Activated CD8-positive, alpha-beta T cell treated with anti-CD3 and anti-CD28 coated beads for 36 hours (primary cell): ENCODE measurements at regions of chr4 and their contacts with region 1.

Region 1: GRCh38 chr4:88523325-88524129 is at the start of gene PYURF:
- DNase-seq: peak; percentile 84
- ATAC-seq: peak; percentile 81
- H3K4me3 Mint-ChIP-seq: peak within 1 kb of the TSS; percentile 90
- H3K27ac Mint-ChIP-seq: peak within 1 kb of the TSS; percentile 89
- H3K4me1 Mint-ChIP-seq: peaks cover 35% of the 10 kb centered on the region
- H3K27me3 Mint-ChIP-seq: no peaks in the 10 kb centered on the region
- CTCF ChIP-seq: no peak
- total RNA-seq, gene PYURF: 47.4 to 50.7 TPM

Region 2: GRCh38 chr4:88297725-88298454 is 225.6 kb before region 1 on chr4:
- CTCF ChIA-PET with region 1: no interaction called
- POLR2A ChIA-PET with region 1: no interaction called
- intact Hi-C with region 1: no loop called
- DNase-seq: no peak
- ATAC-seq: no peak
- H3K4me3 Mint-ChIP-seq: no peak overlapping the region
- H3K27ac Mint-ChIP-seq: no peak overlapping the region
- H3K4me1 Mint-ChIP-seq: no peaks in the 10 kb centered on the region
- H3K27me3 Mint-ChIP-seq: no peaks in the 10 kb centered on the region
- CTCF ChIP-seq: no peak

Region 3: DNA sequence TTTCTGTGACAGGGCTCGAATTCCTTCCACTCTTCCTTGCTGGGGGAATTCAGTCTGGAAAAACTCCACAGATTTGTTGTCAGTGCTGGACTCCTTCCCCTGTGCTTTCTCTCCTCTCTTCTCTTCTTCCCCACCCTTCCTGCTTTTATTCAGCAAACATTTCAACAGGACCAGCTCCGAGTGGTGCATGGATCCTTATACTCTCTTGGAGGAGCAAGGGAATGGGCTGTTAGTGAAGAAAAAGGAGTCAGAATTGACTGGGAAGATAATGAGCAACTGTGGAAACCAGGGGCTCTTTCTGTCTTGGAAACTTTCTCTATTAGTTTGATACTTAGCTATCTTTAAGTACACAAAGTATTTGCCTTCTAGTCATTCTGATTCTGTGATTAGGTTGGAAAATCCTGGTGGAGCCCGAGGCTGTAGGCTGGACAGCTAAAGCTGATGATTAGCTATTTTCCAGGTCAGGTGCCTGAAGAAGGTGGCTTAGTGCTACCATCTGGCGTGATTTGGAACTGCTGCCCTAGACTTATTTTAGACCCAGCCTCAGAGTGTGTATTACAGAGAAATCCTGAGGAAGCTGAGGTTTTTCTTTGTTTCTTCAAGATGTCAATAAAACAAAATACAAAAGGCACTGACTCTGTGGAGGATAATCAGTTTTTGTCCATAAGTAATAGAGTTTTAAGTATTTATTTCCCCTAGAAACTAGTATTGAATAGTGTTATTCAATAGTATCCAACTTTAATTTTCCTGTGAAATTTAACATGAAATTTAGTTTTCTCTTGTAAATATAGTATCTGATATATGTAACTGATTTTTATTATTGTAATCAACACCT is 135.7 kb after region 1 on chr4:
- CTCF ChIA-PET with region 1: interaction called, 10 read pairs
- POLR2A ChIA-PET with region 1: no interaction called
- intact Hi-C with region 1: no loop called
- DNase-seq: peak; percentile 57
- ATAC-seq: peak; percentile 87
- H3K4me3 Mint-ChIP-seq: no peak overlapping the region
- H3K27ac Mint-ChIP-seq: no peak overlapping the region
- H3K4me1 Mint-ChIP-seq: peaks cover 3% of the 10 kb centered on the region
- H3K27me3 Mint-ChIP-seq: no peaks in the 10 kb centered on the region
- CTCF ChIP-seq: peak; percentile 67

Region 4: GRCh38 chr4:88697588-88698329 is 174.2 kb after region 1 on chr4 and contains the start of gene NAP1L5:
- CTCF ChIA-PET with region 1: no interaction called
- POLR2A ChIA-PET with region 1: no interaction called
- intact Hi-C with region 1: no loop called
- DNase-seq: peak; percentile 79
- ATAC-seq: peak; percentile 87
- H3K4me3 Mint-ChIP-seq: peak within 1 kb of the TSS; percentile 80
- H3K27ac Mint-ChIP-seq: peak within 1 kb of the TSS; percentile 73
- H3K4me1 Mint-ChIP-seq: peaks cover 10% of the 10 kb centered on the region
- H3K27me3 Mint-ChIP-seq: no peaks in the 10 kb centered on the region
- CTCF ChIP-seq: no peak
- total RNA-seq, gene NAP1L5: 5.4 to 5.8 TPM

Region 5: GRCh38 chr4:88792268-88792781 is 268.8 kb after region 1 on chr4:
- CTCF ChIA-PET with region 1: interaction called, 3 read pairs
- POLR2A ChIA-PET with region 1: interaction called, 3 read pairs
- intact Hi-C with region 1: loop called (anchors 10 kb)
- DNase-seq: no peak
- ATAC-seq: peak; percentile 85
- H3K4me3 Mint-ChIP-seq: no peak overlapping the region
- H3K27ac Mint-ChIP-seq: no peak overlapping the region
- H3K4me1 Mint-ChIP-seq: peaks cover 16% of the 10 kb centered on the region
- H3K27me3 Mint-ChIP-seq: no peaks in the 10 kb centered on the region
- CTCF ChIP-seq: no peak